Body of pancreas (tissue), 4 donors: ENCODE measurements at regions of chr2 and their contacts with region 1.

Region 1: GRCh38 chr2:65456064-65456463 is 23.7 kb upstream of the SPRED2 start:
- DNase-seq: no peak
- ATAC-seq: no peak
- H3K4me3 ChIP-seq: no peak overlapping the region
- H3K27ac ChIP-seq: no peak overlapping the region
- H3K4me1 ChIP-seq: no peaks in the 10 kb centered on the region
- H3K27me3 ChIP-seq: no peaks in the 10 kb centered on the region
- CTCF ChIP-seq: no peak
- POLR2A ChIP-seq: no peak

Region 2: GRCh38 chr2:65545837-65546805 is 90.1 kb after region 1 on chr2:
- intact Hi-C with region 1: loop called (anchors 10 kb)
- DNase-seq: no peak
- ATAC-seq: no peak
- H3K4me3 ChIP-seq: no peak overlapping the region
- H3K27ac ChIP-seq: no peak overlapping the region
- H3K4me1 ChIP-seq: no peaks in the 10 kb centered on the region
- H3K27me3 ChIP-seq: no peaks in the 10 kb centered on the region
- CTCF ChIP-seq: no peak
- POLR2A ChIP-seq: no peak